Caco-2 (cell line): ENCODE measurements at regions of chr17 and their contacts with region 1.

Region 1: GRCh38 chr17:65407017-65407416 is 154.4 kb downstream of the AXIN2 start:
- DNase-seq: no peak
- H3K4me3 ChIP-seq: no peak overlapping the region
- H3K4me3 Mint-ChIP-seq: no peak overlapping the region
- H3K27ac Mint-ChIP-seq: no peak overlapping the region
- H3K4me1 ChIP-seq: peaks cover 10% of the 10 kb centered on the region; the same call in 1 of the 2 replicates
- H3K4me1 Mint-ChIP-seq: peaks cover 6% of the 10 kb centered on the region
- H3K27me3 ChIP-seq: no peaks in the 10 kb centered on the region
- H3K27me3 Mint-ChIP-seq: peaks cover 2% of the 10 kb centered on the region
- CTCF ChIP-seq: no peak

Region 2: GRCh38 chr17:65294179-65294720 is 112.8 kb before region 1 on chr17:
- CTCF ChIA-PET with region 1: no interaction called
- POLR2A ChIA-PET with region 1: no interaction called
- intact Hi-C with region 1: loop called (anchors 10 kb)
- DNase-seq: peak; percentile 74 to 78
- H3K4me3 ChIP-seq: no peak overlapping the region
- H3K4me3 Mint-ChIP-seq: no peak overlapping the region
- H3K27ac Mint-ChIP-seq: peak overlapping the region; percentile 25
- H3K4me1 ChIP-seq: peaks cover 13% of the 10 kb centered on the region; the same call in 1 of the 2 replicates
- H3K4me1 Mint-ChIP-seq: peaks cover 15% of the 10 kb centered on the region
- H3K27me3 ChIP-seq: no peaks in the 10 kb centered on the region
- H3K27me3 Mint-ChIP-seq: no peaks in the 10 kb centered on the region
- CTCF ChIP-seq: peak; percentile 88 to 90